A673 (cell line): ENCODE measurements at regions of chr20 and their contacts with region 1.

Region 1: DNA sequence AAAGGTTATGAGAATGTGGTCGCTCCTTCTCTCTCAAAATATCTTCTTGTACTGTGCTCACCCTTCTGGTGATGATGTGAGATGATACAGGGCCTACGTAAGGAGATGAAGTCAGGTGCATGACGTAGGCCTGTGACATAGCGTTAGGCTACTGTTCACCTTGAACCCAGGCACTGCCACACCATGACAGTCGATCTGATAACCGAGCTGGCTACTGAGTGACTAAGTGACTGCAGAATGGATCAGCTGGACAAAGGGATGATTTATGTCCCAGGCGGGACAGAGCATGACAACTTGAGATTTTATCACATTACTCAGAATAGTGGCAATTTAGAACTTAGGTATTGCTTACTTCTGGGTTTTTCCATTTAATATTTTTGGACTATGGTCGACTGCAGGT is 11.2 kb downstream of the SLC24A3 start:
- DNase-seq: no peak
- H3K4me3 ChIP-seq: no peak overlapping the region
- H3K27ac ChIP-seq: peak overlapping the region; percentile 97
- H3K4me1 ChIP-seq: peaks cover 58% of the 10 kb centered on the region
- H3K27me3 ChIP-seq: no peaks in the 10 kb centered on the region
- CTCF ChIP-seq: no peak

Region 2: GRCh38 chr20:19212821-19213502 is 10.7 kb before region 1 on chr20:
- CTCF ChIA-PET with region 1: interaction called, 20 read pairs
- POLR2A ChIA-PET with region 1: no interaction called
- intact Hi-C with region 1: no loop called
- DNase-seq: peak; percentile 88
- H3K4me3 ChIP-seq: peak overlapping the region; percentile 88
- H3K27ac ChIP-seq: peak overlapping the region; percentile 97
- H3K4me1 ChIP-seq: peaks cover 60% of the 10 kb centered on the region
- H3K27me3 ChIP-seq: no peaks in the 10 kb centered on the region
- CTCF ChIP-seq: peak; percentile 49

Region 3: GRCh38 chr20:19304389-19304788 is 80.7 kb after region 1 on chr20:
- CTCF ChIA-PET with region 1: no interaction called
- POLR2A ChIA-PET with region 1: no interaction called
- intact Hi-C with region 1: loop called (anchors 5 kb)
- DNase-seq: peak; percentile 92
- H3K4me3 ChIP-seq: no peak overlapping the region
- H3K27ac ChIP-seq: peak overlapping the region; percentile 90
- H3K4me1 ChIP-seq: peaks cover 55% of the 10 kb centered on the region
- H3K27me3 ChIP-seq: no peaks in the 10 kb centered on the region
- CTCF ChIP-seq: no peak

Region 4: GRCh38 chr20:19320005-19320404 is 96.4 kb after region 1 on chr20:
- CTCF ChIA-PET with region 1: interaction called, 7 read pairs
- POLR2A ChIA-PET with region 1: no interaction called
- intact Hi-C with region 1: loop called (anchors 1 kb)
- DNase-seq: peak; percentile 47
- H3K4me3 ChIP-seq: peak overlapping the region; percentile 40
- H3K27ac ChIP-seq: peak overlapping the region; percentile 92
- H3K4me1 ChIP-seq: peaks cover 92% of the 10 kb centered on the region
- H3K27me3 ChIP-seq: no peaks in the 10 kb centered on the region
- CTCF ChIP-seq: no peak

Region 5: DNA sequence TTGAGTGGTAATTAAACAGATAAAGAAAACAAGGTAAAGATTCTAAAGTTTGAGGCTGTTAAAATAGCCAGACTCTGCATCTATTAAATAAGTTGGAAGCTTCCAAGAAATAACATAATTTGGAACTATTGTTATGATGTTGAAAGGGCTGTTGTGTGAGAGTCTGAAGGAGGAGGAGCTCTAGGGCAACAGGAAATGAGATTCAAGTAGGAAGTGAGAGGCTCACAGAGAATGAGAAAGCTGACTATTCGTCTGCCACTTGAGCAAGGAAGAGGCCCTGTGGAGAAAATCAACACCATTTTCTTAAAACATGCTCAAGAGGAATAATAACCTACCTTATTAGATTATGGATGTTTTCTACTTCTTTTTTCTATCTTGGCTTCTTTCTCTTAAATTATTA is 174.0 kb after region 1 on chr20:
- CTCF ChIA-PET with region 1: no interaction called
- POLR2A ChIA-PET with region 1: interaction called, 23 read pairs
- intact Hi-C with region 1: no loop called
- DNase-seq: peak; percentile 92
- H3K4me3 ChIP-seq: no peak overlapping the region
- H3K27ac ChIP-seq: peak overlapping the region; percentile 72
- H3K4me1 ChIP-seq: peaks cover 43% of the 10 kb centered on the region
- H3K27me3 ChIP-seq: no peaks in the 10 kb centered on the region
- CTCF ChIP-seq: no peak

Region 6: GRCh38 chr20:19407761-19408160 is 184.1 kb after region 1 on chr20:
- CTCF ChIA-PET with region 1: no interaction called
- POLR2A ChIA-PET with region 1: no interaction called
- intact Hi-C with region 1: loop called (anchors 5 kb)
- DNase-seq: no peak
- H3K4me3 ChIP-seq: no peak overlapping the region
- H3K27ac ChIP-seq: peak overlapping the region; percentile 1
- H3K4me1 ChIP-seq: peaks cover 31% of the 10 kb centered on the region
- H3K27me3 ChIP-seq: no peaks in the 10 kb centered on the region
- CTCF ChIP-seq: no peak

Region 7: DNA sequence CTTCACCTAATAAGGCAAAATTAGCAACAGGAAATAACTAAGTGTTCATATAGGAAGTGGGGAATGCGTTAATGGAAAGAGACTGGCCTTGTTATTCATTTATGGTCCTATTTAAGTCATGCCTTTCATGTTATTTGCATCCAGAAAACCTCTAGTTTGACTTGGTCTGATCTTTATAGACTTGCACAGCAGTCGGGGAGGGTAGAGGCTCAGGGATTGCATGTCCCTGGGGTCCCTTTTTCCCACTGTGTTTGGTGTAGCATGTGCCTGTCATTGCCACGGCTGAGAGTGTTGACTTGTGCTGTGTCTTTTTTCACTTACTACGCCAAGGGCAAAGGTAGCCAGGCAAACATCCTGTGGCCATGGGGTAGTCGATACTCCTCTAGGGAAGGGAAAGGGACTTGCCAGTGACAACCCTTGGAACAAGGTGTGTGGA is 429.0 kb after region 1 on chr20:
- CTCF ChIA-PET with region 1: no interaction called
- POLR2A ChIA-PET with region 1: interaction called, 29 read pairs
- intact Hi-C with region 1: no loop called
- DNase-seq: peak; percentile 86
- H3K4me3 ChIP-seq: no peak overlapping the region
- H3K27ac ChIP-seq: peak overlapping the region; percentile 81
- H3K4me1 ChIP-seq: peaks cover 27% of the 10 kb centered on the region
- H3K27me3 ChIP-seq: no peaks in the 10 kb centered on the region
- CTCF ChIP-seq: no peak